ENCODE measurements at regions of chr1 and their contacts with region 1.

Region 1: DNA sequence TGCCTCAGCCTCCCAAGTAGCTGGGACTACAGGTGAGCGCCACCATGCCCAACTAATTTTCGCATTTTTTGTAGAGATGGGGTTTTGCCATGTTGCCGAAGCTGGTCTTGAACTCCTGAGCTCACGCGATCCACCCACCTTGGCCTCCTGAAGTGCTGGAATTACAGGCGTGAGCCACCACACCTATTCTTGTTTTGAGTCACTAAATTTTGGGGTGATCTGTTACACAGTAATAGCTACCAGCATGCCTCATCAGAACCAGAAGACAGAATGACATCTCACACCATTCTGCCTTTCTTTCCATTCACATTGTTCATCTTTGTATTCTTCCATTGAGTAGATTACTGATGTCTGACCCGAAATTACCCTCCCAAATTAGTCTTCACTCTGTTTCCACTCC is 9.1 kb downstream of the RHBDL2 start:
- DNase-seq: peak; percentile 44
- ATAC-seq: peak; percentile 82
- H3K4me3 Mint-ChIP-seq: no peak overlapping the region
- H3K27ac Mint-ChIP-seq: peak overlapping the region; percentile 4
- H3K4me1 Mint-ChIP-seq: peaks cover 11% of the 10 kb centered on the region
- H3K27me3 Mint-ChIP-seq: peaks cover 2% of the 10 kb centered on the region

Region 2: GRCh38 chr1:38424677-38425076 is 507.9 kb before region 1 on chr1:
- CTCF ChIA-PET with region 1: no interaction called
- POLR2A ChIA-PET with region 1: no interaction called
- intact Hi-C with region 1: no loop called
- DNase-seq: no peak
- ATAC-seq: no peak
- H3K4me3 Mint-ChIP-seq: no peak overlapping the region
- H3K27ac Mint-ChIP-seq: no peak overlapping the region
- H3K4me1 Mint-ChIP-seq: no peaks in the 10 kb centered on the region
- H3K27me3 Mint-ChIP-seq: peaks cover 16% of the 10 kb centered on the region

Region 3: DNA sequence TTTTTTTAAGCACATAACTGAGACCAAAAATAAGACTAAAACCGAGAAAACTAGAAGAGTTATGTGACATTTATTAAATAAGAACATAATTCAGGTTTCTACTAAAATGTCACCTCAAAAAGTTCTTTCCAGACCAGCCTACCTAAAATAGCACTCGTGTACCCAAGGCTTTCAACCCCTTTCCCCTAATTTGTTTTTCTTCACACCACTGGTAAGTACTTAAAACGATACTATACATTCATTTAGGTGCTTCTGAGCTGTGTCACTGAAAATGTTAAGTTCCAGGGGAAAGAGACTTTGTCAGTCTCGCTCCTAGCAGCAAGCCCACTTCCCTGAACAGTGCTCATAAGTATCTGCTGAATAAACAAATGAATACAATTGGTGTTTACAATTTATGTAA is 79.8 kb before region 1 on chr1:
- CTCF ChIA-PET with region 1: no interaction called
- POLR2A ChIA-PET with region 1: no interaction called
- intact Hi-C with region 1: loop called in 1 of 2 experiments (anchors 5 kb)
- DNase-seq: peak; percentile 44
- ATAC-seq: peak; percentile 97
- H3K4me3 Mint-ChIP-seq: peak overlapping the region; percentile 32
- H3K27ac Mint-ChIP-seq: peak overlapping the region; percentile 87
- H3K4me1 Mint-ChIP-seq: peaks cover 44% of the 10 kb centered on the region
- H3K27me3 Mint-ChIP-seq: no peaks in the 10 kb centered on the region